T-cell (primary cell): ENCODE measurements at regions of chr11 and their contacts with region 1.

Region 1: GRCh38 chr11:103108933-103109817 is at the start of gene DYNC2H1:
- DNase-seq: peak; percentile 68 to 93 (median 81)
- ATAC-seq: peak; percentile 95 to 96 (median 96)
- H3K4me3 ChIP-seq: peak within 1 kb of the TSS; percentile 69 to 70
- H3K4me3 Mint-ChIP-seq: peak within 1 kb of the TSS; percentile 89 to 93 (median 91)
- H3K27ac ChIP-seq: peak within 1 kb of the TSS; percentile 57
- H3K27ac Mint-ChIP-seq: peak within 1 kb of the TSS; percentile 90
- H3K4me1 ChIP-seq: peaks cover 8 to 10% of the 10 kb centered on the region in 2 experiments
- H3K4me1 Mint-ChIP-seq: peaks cover 14 to 19% (median 14%) of the 10 kb centered on the region in 3 donors
- H3K27me3 ChIP-seq: no peaks in the 10 kb centered on the region
- H3K27me3 Mint-ChIP-seq: peaks cover 0 to 4% of the 10 kb centered on the region in 2 donors
- total RNA-seq, gene DYNC2H1: 2.6 to 4.4 (median 3.2) TPM

Region 2: GRCh38 chr11:103055221-103055890 is 53.8 kb before region 1 on chr11:
- CTCF ChIA-PET with region 1: no interaction called
- POLR2A ChIA-PET with region 1: no interaction called
- DNase-seq: peak in 1 of 35 experiments; percentile 44
- ATAC-seq: peak in 3 of 4 experiments; percentile 49 to 52 (median 50)
- H3K4me3 ChIP-seq: no peak overlapping the region
- H3K4me3 Mint-ChIP-seq: no peak overlapping the region
- H3K27ac ChIP-seq: no peak overlapping the region
- H3K27ac Mint-ChIP-seq: no peak overlapping the region
- H3K4me1 ChIP-seq: no peaks in the 10 kb centered on the region
- H3K4me1 Mint-ChIP-seq: no peaks in the 10 kb centered on the region
- H3K27me3 ChIP-seq: no peaks in the 10 kb centered on the region
- H3K27me3 Mint-ChIP-seq: no peaks in the 10 kb centered on the region

Region 3: GRCh38 chr11:103091801-103092524 is 17.2 kb before region 1 on chr11 and contains the start of gene DCUN1D5:
- CTCF ChIA-PET with region 1: interaction called, 4 to 17 read pairs
- POLR2A ChIA-PET with region 1: interaction called, 4 to 20 read pairs
- DNase-seq: peak; percentile 86 to 96 (median 92)
- ATAC-seq: peak; percentile 97 to 98 (median 98)
- H3K4me3 ChIP-seq: peak within 1 kb of the TSS; percentile 67 to 70
- H3K4me3 Mint-ChIP-seq: peak within 1 kb of the TSS; percentile 82 to 96 (median 89)
- H3K27ac ChIP-seq: peak within 1 kb of the TSS; percentile 86
- H3K27ac Mint-ChIP-seq: peak within 1 kb of the TSS; percentile 87 to 92
- H3K4me1 ChIP-seq: peaks cover 13 to 16% of the 10 kb centered on the region in 2 experiments
- H3K4me1 Mint-ChIP-seq: peaks cover 29 to 37% (median 33%) of the 10 kb centered on the region in 3 donors
- H3K27me3 ChIP-seq: peaks cover 2 to 12% of the 10 kb centered on the region in 2 experiments
- H3K27me3 Mint-ChIP-seq: peaks cover 13 to 32% of the 10 kb centered on the region in 2 donors
- total RNA-seq, gene DCUN1D5: 13.1 to 19.2 (median 15.6) TPM